GM10248 (cell line): ENCODE measurements at regions of chr4 and their contacts with region 1.

Region 1: GRCh38 chr4:55345980-55346850 is at the start of gene SRD5A3:
- DNase-seq: peak; percentile 92
- CTCF ChIP-seq: peak; percentile 94

Region 2: DNA sequence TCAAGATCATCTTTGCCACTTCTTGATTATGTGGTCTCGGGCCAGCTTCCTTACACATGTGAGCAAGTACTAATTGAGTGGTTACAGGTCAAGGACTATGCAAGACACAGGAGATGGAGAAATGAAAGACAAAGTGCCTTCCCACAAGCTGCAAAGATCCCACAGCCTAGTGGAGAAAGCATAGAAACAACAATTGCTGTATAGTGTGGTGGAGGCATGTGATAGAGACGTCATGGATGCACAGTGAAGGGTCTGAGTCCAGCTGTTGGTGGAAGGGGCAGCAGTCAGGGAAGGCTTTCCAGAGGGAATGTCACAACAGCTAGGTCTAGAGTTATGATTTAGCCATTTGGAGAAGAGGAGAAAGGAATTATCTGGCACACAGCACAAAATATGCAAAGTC is 431.4 kb before region 1 on chr4:
- CTCF ChIA-PET with region 1: no interaction called
- POLR2A ChIA-PET with region 1: no interaction called
- DNase-seq: no peak
- CTCF ChIP-seq: no peak

Region 3: DNA sequence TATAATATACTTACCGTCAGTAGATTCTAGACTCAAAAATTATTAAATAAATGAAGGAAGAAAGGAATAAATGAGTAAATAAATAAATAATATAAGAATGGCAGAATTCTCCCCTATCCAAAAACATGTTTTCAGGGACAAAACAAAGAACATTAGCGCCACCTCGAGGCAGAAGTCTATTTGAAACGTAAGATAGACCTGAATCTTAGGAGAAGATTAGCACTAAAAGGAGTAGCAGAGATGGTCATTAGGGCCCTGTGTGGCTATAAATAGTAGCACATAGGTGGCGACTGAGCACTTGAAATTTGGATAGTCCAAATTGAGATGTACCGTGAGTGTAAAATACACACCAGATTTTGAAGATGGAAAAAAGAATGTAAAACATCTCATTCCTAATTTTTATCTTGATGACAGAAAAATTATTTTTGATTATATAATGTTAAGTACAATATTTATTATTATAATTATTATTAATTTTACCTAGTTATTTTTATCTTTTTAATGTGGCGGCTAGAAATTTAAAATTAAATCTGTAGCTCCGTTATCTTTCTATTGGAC is 24.4 kb before region 1 on chr4:
- CTCF ChIA-PET with region 1: interaction called, 13 read pairs
- POLR2A ChIA-PET with region 1: no interaction called
- DNase-seq: peak; percentile 25
- CTCF ChIP-seq: peak; percentile 45

Region 4: GRCh38 chr4:55358668-55359067 is 12.5 kb after region 1 on chr4:
- CTCF ChIA-PET with region 1: interaction called, 24 read pairs
- POLR2A ChIA-PET with region 1: no interaction called
- DNase-seq: peak; percentile 43
- CTCF ChIP-seq: no peak

Region 5: GRCh38 chr4:55363691-55364351 is 17.6 kb after region 1 on chr4:
- CTCF ChIA-PET with region 1: interaction called, 21 read pairs
- POLR2A ChIA-PET with region 1: no interaction called
- DNase-seq: no peak
- CTCF ChIP-seq: no peak

Region 6: GRCh38 chr4:55395529-55396307 is 49.5 kb after region 1 on chr4 and contains the start of gene TMEM165:
- CTCF ChIA-PET with region 1: interaction called, 28 read pairs
- POLR2A ChIA-PET with region 1: no interaction called
- DNase-seq: peak; percentile 95
- CTCF ChIP-seq: no peak